ENCODE measurements at regions of chr3 and their contacts with region 1.

Region 1: DNA sequence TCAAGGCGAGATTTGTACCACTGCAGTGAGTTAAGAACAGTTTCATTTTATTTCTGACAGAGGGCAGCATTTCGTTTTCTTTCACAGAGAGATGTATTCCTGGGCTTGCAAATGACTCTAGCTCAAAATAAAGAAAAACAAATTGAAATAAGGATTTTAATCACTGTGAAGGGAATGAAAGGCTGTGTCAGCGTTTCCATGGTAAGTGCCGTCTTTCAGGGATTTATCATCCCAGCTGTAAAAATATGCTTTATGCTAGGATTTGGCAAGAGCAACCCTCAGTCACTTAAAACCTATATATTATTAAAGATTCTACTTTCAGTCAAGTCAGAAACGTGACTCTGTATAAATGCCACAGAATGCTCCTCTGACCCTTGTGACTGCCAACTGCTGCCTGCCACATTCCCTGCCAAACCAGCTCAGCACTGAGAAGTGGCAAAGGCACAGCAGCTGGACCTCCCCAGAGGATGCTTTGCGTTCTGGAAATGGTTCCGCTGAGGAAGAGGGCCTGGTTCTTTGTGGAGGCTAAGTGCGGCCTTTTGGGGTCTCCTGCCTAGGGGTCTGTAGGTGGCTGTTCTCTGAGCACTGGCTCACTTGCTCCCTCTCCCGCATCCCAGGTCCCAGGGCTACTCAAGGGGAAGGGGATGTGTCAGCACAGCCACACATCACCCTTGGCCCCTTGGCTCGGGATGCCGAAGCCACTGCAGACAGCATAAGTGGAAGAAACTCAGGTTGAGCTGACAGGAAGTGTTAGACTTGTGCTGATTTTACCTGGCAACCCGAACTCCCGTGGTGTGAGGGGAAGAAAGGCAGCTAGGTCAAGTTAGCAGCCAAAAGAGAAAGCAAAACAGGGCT is 56.6 kb upstream of the POMGNT2 start:
- DNase-seq: peak; percentile 29
- CTCF ChIP-seq: no peak

Region 2: DNA sequence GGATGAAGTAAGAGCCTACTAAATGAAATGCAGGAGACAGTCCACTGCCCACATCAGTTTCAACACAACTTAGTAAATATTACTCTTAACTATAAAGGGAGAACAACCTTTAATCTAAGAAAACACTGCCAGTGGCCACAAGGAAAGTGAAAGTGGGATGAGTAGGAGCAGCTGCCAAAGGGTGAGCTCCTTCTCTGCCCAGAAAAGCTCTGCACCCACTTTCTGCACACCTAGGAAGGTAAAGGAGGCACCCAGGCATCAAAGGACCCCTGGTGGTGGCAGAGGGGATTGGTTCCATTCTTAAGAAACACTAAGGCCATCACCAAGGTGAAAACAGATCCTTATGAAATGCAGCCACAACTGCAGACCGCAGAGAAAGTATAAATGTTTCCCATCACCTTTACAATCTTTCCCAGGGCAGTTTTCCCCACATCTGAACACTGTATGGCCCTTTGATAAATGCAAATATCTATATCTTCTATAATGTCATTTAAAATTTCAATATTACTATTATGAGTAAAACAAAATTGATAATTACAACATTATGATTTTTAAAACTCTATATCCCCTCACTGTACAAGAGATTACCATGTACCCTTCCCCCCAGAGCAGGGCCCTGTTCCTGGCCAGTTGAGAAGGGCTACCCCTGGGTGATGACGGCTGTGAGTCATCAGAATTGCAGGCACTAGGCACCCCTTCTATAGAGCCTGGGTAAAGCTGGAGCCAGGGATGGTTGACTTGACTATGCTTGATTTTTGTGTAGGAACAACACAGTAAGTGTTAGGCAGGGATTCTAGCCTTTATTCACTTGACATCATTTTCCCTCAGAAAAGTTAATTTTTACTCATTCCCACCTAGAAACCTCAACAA is 215.8 kb after region 1 on chr3:
- in situ Hi-C with region 1: loop called (anchors 10 kb)
- DNase-seq: peak; percentile 78
- CTCF ChIP-seq: peak; percentile 46

Region 3: GRCh38 chr3:43503067-43503728 is 340.7 kb after region 1 on chr3:
- in situ Hi-C with region 1: loop called (anchors 25 kb)
- DNase-seq: peak; percentile 24
- CTCF ChIP-seq: no peak

Measured in GM13976 (cell line).